Activated CD4-positive, alpha-beta T cell treated with anti-CD3 and anti-CD28 coated beads, Interleukin-2, amount 10 ng/mL, durations not matched to agents 7 days and 5 days (primary cell): ENCODE measurements at regions of chr2 and their contacts with region 1.

Region 1: GRCh38 chr2:10434886-10435819 is 13.0 kb downstream of the ODC1 start:
- DNase-seq: peak; percentile 68
- H3K4me3 Mint-ChIP-seq: no peak overlapping the region
- H3K27ac Mint-ChIP-seq: no peak overlapping the region
- H3K4me1 Mint-ChIP-seq: peaks cover 14% of the 10 kb centered on the region
- H3K27me3 Mint-ChIP-seq: peaks cover 4% of the 10 kb centered on the region

Region 2: GRCh38 chr2:10120158-10120886 is 314.8 kb before region 1 on chr2:
- CTCF ChIA-PET with region 1: interaction called, 29 read pairs
- POLR2A ChIA-PET with region 1: no interaction called
- DNase-seq: peak; percentile 96
- H3K4me3 Mint-ChIP-seq: peak overlapping the region; percentile 98
- H3K27ac Mint-ChIP-seq: peak overlapping the region; percentile 99
- H3K4me1 Mint-ChIP-seq: peaks cover 57% of the 10 kb centered on the region
- H3K27me3 Mint-ChIP-seq: no peaks in the 10 kb centered on the region

Region 3: GRCh38 chr2:10141736-10142642 is 293.2 kb before region 1 on chr2:
- CTCF ChIA-PET with region 1: interaction called, 16 read pairs
- POLR2A ChIA-PET with region 1: no interaction called
- DNase-seq: peak; percentile 72
- H3K4me3 Mint-ChIP-seq: peak overlapping the region; percentile 38
- H3K27ac Mint-ChIP-seq: peak overlapping the region; percentile 82
- H3K4me1 Mint-ChIP-seq: peaks cover 47% of the 10 kb centered on the region
- H3K27me3 Mint-ChIP-seq: no peaks in the 10 kb centered on the region

Region 4: GRCh38 chr2:10414000-10414451 is 21.1 kb before region 1 on chr2:
- CTCF ChIA-PET with region 1: interaction called, 30 read pairs
- POLR2A ChIA-PET with region 1: no interaction called
- DNase-seq: no peak
- H3K4me3 Mint-ChIP-seq: no peak overlapping the region
- H3K27ac Mint-ChIP-seq: no peak overlapping the region
- H3K4me1 Mint-ChIP-seq: peaks cover 8% of the 10 kb centered on the region
- H3K27me3 Mint-ChIP-seq: no peaks in the 10 kb centered on the region

Region 5: GRCh38 chr2:10424051-10424450 is 11.1 kb before region 1 on chr2:
- CTCF ChIA-PET with region 1: interaction called, 30 read pairs
- POLR2A ChIA-PET with region 1: no interaction called
- DNase-seq: no peak
- H3K4me3 Mint-ChIP-seq: no peak overlapping the region
- H3K27ac Mint-ChIP-seq: no peak overlapping the region
- H3K4me1 Mint-ChIP-seq: no peaks in the 10 kb centered on the region
- H3K27me3 Mint-ChIP-seq: no peaks in the 10 kb centered on the region

Region 6: GRCh38 chr2:10448208-10448645 is 13.1 kb after region 1 on chr2 and contains the start of gene ODC1:
- CTCF ChIA-PET with region 1: interaction called, 55 read pairs
- POLR2A ChIA-PET with region 1: no interaction called
- DNase-seq: peak; percentile 97
- H3K4me3 Mint-ChIP-seq: peak within 1 kb of the TSS; percentile 91
- H3K27ac Mint-ChIP-seq: peak within 1 kb of the TSS; percentile 97
- H3K4me1 Mint-ChIP-seq: peaks cover 51% of the 10 kb centered on the region
- H3K27me3 Mint-ChIP-seq: no peaks in the 10 kb centered on the region
- total RNA-seq, gene ODC1: 47.1 to 50.3 TPM

Region 7: DNA sequence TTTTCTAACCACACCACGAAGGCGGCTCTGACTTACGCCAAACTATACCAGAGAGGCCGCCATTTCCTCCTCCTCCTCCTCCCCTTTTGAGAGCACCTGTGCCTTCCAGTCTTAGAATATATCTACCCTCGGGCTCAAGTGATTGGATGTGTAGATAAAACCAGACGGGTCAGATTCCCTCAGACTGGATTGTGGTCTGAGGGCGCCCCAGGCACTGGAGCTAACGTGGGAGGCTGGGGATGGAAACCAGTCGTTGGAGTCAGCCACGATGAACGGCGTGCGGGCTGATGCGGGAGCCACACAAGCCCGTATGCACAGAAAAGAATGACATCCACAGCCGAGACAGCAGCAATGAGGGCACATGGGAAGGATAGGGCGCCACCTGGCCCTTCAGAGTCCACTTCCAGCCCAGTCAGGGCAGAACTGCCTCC is 25.2 kb after region 1 on chr2:
- CTCF ChIA-PET with region 1: no interaction called
- POLR2A ChIA-PET with region 1: no interaction called
- DNase-seq: no peak
- H3K4me3 Mint-ChIP-seq: no peak overlapping the region
- H3K27ac Mint-ChIP-seq: peak overlapping the region; percentile 25
- H3K4me1 Mint-ChIP-seq: no peaks in the 10 kb centered on the region
- H3K27me3 Mint-ChIP-seq: peaks cover 7% of the 10 kb centered on the region